Activated B cell treated with CpG ODN at 0.5 μM for 24 hours (primary cell): ENCODE measurements at regions of chr1 and their contacts with region 1.

Region 1: GRCh38 chr1:157505481-157506272 is 46.6 kb downstream of the FCRL5 start:
- DNase-seq: peak; percentile 33
- ATAC-seq: peak; percentile 98
- H3K4me3 Mint-ChIP-seq: peak overlapping the region; percentile 69
- H3K27ac Mint-ChIP-seq: peak overlapping the region; percentile 50
- H3K4me1 Mint-ChIP-seq: peaks cover 37% of the 10 kb centered on the region
- H3K27me3 Mint-ChIP-seq: no peaks in the 10 kb centered on the region
- CTCF ChIP-seq: no peak

Region 2: GRCh38 chr1:156898161-156898566 is 607.5 kb before region 1 on chr1:
- CTCF ChIA-PET with region 1: no interaction called
- POLR2A ChIA-PET with region 1: no interaction called
- intact Hi-C with region 1: no loop called
- DNase-seq: no peak
- ATAC-seq: no peak
- H3K4me3 Mint-ChIP-seq: no peak overlapping the region
- H3K27ac Mint-ChIP-seq: no peak overlapping the region
- H3K4me1 Mint-ChIP-seq: peaks cover 2% of the 10 kb centered on the region
- H3K27me3 Mint-ChIP-seq: peaks cover 60% of the 10 kb centered on the region
- CTCF ChIP-seq: no peak

Region 3: DNA sequence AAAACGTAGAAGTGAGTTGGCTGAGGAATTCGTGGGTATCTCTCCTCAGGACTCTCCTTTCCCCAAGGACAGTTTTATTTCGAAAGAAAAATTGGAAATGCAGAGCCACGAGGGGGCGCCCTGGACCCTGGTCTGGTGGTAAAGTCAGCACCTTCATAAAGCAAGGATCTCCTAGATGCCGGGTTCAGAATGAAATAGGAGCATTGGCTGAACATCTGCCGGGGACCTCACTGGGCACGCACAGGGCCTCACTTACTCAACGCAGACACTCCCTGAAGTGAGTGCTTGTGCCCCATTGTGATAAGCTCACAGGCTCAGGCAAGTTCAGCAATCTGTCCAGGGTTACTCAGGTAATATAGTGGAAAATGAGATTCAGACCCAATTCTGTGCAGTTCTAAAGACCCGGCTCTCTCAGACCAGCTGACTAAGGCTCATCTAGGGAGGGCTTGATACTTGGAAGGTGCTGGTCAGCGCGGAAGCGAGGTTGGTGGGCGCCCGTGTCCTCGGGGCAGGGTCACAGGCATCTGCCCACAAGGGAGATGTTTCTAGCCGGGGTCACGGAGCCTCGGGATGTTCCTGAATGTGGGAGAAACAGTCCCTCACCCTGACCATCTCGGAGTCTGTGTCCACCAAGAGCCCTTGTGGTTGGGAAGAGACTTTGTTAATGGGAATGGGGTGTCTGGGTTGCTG is 311.8 kb before region 1 on chr1:
- CTCF ChIA-PET with region 1: interaction called, 16 read pairs
- POLR2A ChIA-PET with region 1: no interaction called
- intact Hi-C with region 1: no loop called
- DNase-seq: peak; percentile 55
- ATAC-seq: peak; percentile 25
- H3K4me3 Mint-ChIP-seq: no peak overlapping the region
- H3K27ac Mint-ChIP-seq: no peak overlapping the region
- H3K4me1 Mint-ChIP-seq: peaks cover 4% of the 10 kb centered on the region
- H3K27me3 Mint-ChIP-seq: peaks cover 30% of the 10 kb centered on the region
- CTCF ChIP-seq: no peak

Region 4: GRCh38 chr1:157369808-157370521 is 135.7 kb before region 1 on chr1:
- CTCF ChIA-PET with region 1: interaction called, 15 read pairs
- POLR2A ChIA-PET with region 1: no interaction called
- intact Hi-C with region 1: loop called (anchors 5 kb)
- DNase-seq: no peak
- ATAC-seq: peak; percentile 77
- H3K4me3 Mint-ChIP-seq: no peak overlapping the region
- H3K27ac Mint-ChIP-seq: no peak overlapping the region
- H3K4me1 Mint-ChIP-seq: no peaks in the 10 kb centered on the region
- H3K27me3 Mint-ChIP-seq: no peaks in the 10 kb centered on the region
- CTCF ChIP-seq: peak; percentile 96

Region 5: GRCh38 chr1:157431751-157432150 is 73.9 kb before region 1 on chr1:
- CTCF ChIA-PET with region 1: no interaction called
- POLR2A ChIA-PET with region 1: interaction called, 13 read pairs
- intact Hi-C with region 1: no loop called
- DNase-seq: no peak
- ATAC-seq: no peak
- H3K4me3 Mint-ChIP-seq: no peak overlapping the region
- H3K27ac Mint-ChIP-seq: no peak overlapping the region
- H3K4me1 Mint-ChIP-seq: no peaks in the 10 kb centered on the region
- H3K27me3 Mint-ChIP-seq: peaks cover 13% of the 10 kb centered on the region
- CTCF ChIP-seq: no peak

Region 6: DNA sequence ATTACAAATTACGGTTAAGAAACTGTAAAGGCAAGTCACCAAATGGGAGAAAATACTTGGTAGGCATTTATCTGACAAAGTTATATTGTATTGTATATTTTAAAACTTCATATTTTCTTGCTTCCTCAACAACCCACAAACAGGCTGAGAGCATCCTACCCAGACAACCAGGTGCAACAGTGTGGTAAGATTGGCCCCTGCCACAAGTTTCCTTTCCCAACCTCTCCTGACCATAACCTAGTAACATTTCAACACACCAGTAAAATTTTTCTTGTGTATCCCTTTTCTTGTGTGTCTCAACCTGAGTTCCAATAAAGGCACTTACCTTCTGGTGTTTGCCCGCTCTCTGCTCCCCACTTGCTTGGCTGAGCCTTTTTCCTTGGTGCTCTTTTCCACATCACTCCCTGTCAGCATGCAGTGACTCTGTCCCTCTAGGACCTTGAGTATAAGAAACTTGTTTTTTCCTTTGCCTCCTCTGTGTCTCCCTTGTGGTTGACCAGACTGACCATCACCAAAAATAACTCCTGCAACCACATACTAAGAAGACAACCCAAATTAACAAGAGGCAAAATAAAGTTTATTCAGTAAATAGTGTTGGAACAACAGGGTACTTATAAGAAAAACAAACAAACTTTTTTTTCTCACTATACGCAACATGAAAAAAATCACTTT is 154.0 kb after region 1 on chr1:
- CTCF ChIA-PET with region 1: no interaction called
- POLR2A ChIA-PET with region 1: no interaction called
- intact Hi-C with region 1: no loop called
- DNase-seq: no peak
- ATAC-seq: no peak
- H3K4me3 Mint-ChIP-seq: no peak overlapping the region
- H3K27ac Mint-ChIP-seq: no peak overlapping the region
- H3K4me1 Mint-ChIP-seq: peaks cover 38% of the 10 kb centered on the region
- H3K27me3 Mint-ChIP-seq: no peaks in the 10 kb centered on the region
- CTCF ChIP-seq: no peak

Region 7: GRCh38 chr1:157862114-157863070 is 356.7 kb after region 1 on chr1:
- CTCF ChIA-PET with region 1: interaction called, 4 read pairs
- POLR2A ChIA-PET with region 1: no interaction called
- intact Hi-C with region 1: loop called (anchors 10 kb)
- DNase-seq: no peak
- ATAC-seq: peak; percentile 47
- H3K4me3 Mint-ChIP-seq: no peak overlapping the region
- H3K27ac Mint-ChIP-seq: peak overlapping the region; percentile 31
- H3K4me1 Mint-ChIP-seq: peaks cover 18% of the 10 kb centered on the region
- H3K27me3 Mint-ChIP-seq: no peaks in the 10 kb centered on the region
- CTCF ChIP-seq: no peak